ENCODE measurements at regions of chr11 and their contacts with region 1.

Region 1: DNA sequence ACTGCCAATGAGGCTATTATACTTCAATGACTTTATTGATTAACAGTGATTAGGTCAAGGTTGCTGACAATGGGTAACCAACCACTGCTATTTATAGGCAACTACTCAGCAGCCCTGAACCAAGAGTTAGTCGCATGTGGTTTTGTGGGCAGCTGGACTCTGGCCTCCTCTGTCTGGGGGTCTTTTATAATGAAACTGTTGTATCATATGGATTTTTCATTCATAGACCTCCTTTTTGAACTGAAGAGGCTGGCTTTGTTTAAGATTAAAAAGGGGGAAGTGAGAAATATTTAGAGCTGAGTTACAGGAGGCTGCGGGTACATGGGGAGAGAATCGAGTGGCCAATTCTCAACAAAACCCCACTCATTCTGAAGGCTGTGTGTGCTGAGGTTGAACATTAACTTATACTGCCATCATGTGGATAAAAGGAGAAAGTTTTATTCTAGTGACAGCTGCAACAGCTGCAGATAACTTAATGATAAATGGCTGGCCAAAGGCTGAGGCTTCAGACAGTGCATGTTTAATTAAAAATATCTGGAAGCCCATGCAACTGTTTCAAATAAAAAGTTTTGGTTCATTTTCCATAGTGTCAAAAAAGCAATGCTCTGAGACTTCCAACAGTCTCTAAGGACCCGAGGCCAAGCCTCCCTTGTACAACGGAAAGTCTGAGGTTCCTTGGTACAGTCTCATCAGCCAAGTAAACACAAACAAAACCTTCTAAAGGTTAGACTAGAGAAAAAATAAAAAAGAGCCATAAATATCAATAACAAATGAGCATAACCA is 682.6 kb downstream of the KCNA4 start:
- DNase-seq: peak; percentile 92
- H3K4me3 ChIP-seq: no peak overlapping the region
- H3K27ac ChIP-seq: no peak overlapping the region
- H3K4me1 ChIP-seq: no peaks in the 10 kb centered on the region
- H3K27me3 ChIP-seq: peaks cover 72% of the 10 kb centered on the region
- CTCF ChIP-seq: peak; percentile 88

Region 2: GRCh38 chr11:27506200-27507182 is 1827.7 kb before region 1 on chr11 and contains the start of gene LIN7C:
- CTCF ChIA-PET with region 1: no interaction called
- POLR2A ChIA-PET with region 1: no interaction called
- intact Hi-C with region 1: loop called (anchors 5 kb)
- DNase-seq: peak; percentile 100
- H3K4me3 ChIP-seq: peak within 1 kb of the TSS; percentile 65
- H3K27ac ChIP-seq: peak within 1 kb of the TSS; percentile 91
- H3K4me1 ChIP-seq: peaks cover 20% of the 10 kb centered on the region
- H3K27me3 ChIP-seq: no peaks in the 10 kb centered on the region
- CTCF ChIP-seq: peak; percentile 37
- total RNA-seq, gene LIN7C: 114 and 131 TPM in 2 replicates

Region 3: GRCh38 chr11:27847496-27847895 is 1486.7 kb before region 1 on chr11:
- CTCF ChIA-PET with region 1: no interaction called
- POLR2A ChIA-PET with region 1: no interaction called
- intact Hi-C with region 1: loop called (anchors 10 kb)
- DNase-seq: no peak
- H3K4me3 ChIP-seq: no peak overlapping the region
- H3K27ac ChIP-seq: no peak overlapping the region
- H3K4me1 ChIP-seq: no peaks in the 10 kb centered on the region
- H3K27me3 ChIP-seq: peaks cover 71% of the 10 kb centered on the region
- CTCF ChIP-seq: no peak

Region 4: DNA sequence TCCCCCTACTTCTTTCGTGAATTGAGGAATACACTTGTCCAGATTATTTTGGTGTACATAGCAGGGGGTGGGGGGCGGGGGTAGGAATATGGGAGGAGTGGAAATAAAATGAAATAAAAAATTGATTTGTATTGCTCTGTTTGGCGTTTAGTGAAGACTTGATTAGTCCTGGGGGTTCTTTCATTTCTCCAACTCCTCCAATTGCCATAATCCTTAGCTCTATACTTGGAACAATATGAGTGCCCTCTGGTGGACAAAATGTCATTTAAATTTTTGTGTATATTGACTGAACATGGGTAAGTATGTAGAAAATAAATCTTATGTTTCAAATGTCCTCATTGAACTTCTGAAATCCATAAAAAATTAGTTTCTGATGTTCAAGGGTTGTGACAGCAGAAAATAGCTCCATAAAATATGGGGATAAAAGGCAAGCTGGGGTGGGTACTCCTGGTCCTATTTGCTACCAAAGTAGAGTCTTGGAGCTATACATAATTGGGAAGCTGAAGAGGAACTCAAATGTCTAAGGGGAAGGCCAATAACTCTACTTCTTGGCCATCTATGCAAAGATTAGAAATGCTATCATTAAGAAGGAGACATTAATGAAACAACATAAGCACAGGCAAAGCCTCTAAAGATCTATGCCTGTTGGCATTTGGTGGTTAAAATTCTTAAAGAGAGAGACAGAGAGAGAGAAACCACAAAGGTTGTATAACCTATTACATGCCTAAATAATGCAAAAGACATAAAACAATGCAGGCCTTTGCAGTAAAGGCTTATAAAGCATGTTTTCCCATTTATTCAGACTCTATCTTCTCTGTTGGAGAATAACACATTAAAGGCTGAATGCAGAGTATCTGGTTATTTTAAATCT is 804.4 kb before region 1 on chr11:
- CTCF ChIA-PET with region 1: no interaction called
- POLR2A ChIA-PET with region 1: no interaction called
- intact Hi-C with region 1: loop called (anchors 1 kb)
- DNase-seq: peak; percentile 89
- H3K4me3 ChIP-seq: no peak overlapping the region
- H3K27ac ChIP-seq: no peak overlapping the region
- H3K4me1 ChIP-seq: no peaks in the 10 kb centered on the region
- H3K27me3 ChIP-seq: peaks cover 38% of the 10 kb centered on the region
- CTCF ChIP-seq: peak; percentile 93

Region 5: GRCh38 chr11:28963189-28963588 is 371.0 kb before region 1 on chr11:
- CTCF ChIA-PET with region 1: no interaction called
- POLR2A ChIA-PET with region 1: no interaction called
- intact Hi-C with region 1: loop called (anchors 5 kb)
- DNase-seq: no peak
- H3K4me3 ChIP-seq: no peak overlapping the region
- H3K27ac ChIP-seq: no peak overlapping the region
- H3K4me1 ChIP-seq: no peaks in the 10 kb centered on the region
- H3K27me3 ChIP-seq: no peaks in the 10 kb centered on the region
- CTCF ChIP-seq: no peak

Region 6: DNA sequence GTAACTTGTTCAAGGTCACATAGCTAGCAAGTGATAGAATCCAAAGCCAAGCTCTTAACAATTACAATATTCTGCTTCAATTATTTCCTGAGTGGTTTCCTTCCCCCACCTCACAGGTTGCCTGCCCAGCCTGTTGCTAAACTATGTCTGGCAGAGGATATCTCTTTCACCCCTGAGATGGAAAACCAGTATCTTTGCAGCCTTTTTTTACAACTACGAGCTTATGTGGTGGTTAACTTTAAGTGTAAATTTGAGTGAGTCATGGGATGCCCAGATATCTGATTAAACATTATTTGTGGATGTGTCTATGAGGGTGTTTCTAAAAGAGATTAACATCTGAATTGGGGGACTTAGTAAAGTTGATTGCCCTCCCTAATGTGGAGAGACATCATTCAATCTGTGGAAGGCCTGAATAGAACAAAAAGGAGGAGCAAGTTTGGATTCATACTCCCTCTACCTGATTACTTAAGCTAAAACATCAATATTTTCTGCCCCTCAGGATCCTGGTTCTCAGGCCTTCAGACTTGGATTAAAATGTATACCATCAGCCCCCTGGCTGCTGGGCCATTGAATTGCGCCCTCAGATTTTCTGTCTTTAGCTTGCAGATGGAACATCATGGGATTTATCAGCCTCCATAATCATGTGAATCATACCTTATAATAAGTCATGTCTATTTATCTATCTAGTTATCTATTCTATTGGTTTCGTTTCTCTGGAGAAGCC is 314.1 kb before region 1 on chr11:
- CTCF ChIA-PET with region 1: no interaction called
- POLR2A ChIA-PET with region 1: no interaction called
- intact Hi-C with region 1: loop called (anchors 5 kb)
- DNase-seq: peak; percentile 82
- H3K4me3 ChIP-seq: no peak overlapping the region
- H3K27ac ChIP-seq: no peak overlapping the region
- H3K4me1 ChIP-seq: no peaks in the 10 kb centered on the region
- H3K27me3 ChIP-seq: no peaks in the 10 kb centered on the region
- CTCF ChIP-seq: peak; percentile 97

Region 7: GRCh38 chr11:29282088-29282487 is 52.1 kb before region 1 on chr11:
- CTCF ChIA-PET with region 1: no interaction called
- POLR2A ChIA-PET with region 1: no interaction called
- intact Hi-C with region 1: no loop called
- DNase-seq: peak; percentile 82
- H3K4me3 ChIP-seq: no peak overlapping the region
- H3K27ac ChIP-seq: no peak overlapping the region
- H3K4me1 ChIP-seq: no peaks in the 10 kb centered on the region
- H3K27me3 ChIP-seq: no peaks in the 10 kb centered on the region
- CTCF ChIP-seq: no peak